Activated naive CD4-positive, alpha-beta T cell treated with anti-CD3 and anti-CD28 coated beads for 36 hours (primary cell): ENCODE measurements at regions of chr4 and their contacts with region 1.

Region 1: DNA sequence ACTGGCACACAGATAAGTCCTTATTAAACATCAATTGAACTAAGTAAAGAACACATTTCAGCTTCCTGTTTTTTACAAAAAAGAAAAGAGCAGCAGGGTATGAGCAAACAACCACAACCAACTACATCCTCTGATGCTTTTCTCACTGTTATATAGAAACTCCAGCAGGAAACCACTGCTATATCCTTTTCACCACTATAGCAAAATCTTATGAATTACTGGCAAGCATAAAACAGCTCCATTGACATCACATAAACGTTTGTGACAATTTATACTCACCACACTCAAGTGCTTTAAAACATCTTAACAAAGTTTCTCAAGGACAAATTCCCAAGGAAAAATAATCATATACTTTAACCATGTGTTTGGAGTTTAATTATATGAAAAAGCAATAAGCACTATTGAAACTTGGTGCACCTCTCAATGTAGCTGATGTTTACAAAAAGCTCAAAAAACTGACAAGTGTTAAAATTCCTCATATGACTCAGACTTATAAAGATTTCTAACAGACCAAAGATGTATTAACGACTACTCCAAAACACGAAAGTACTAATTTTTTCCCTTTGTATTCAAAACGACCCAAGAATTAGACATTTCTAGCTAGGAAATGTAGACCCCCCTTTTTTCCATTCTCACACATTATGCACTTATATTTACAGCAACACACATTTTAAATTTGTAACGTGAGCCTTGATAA is 12.9 kb downstream of the GPRIN3 start:
- DNase-seq: no peak
- H3K4me3 Mint-ChIP-seq: peak overlapping the region; percentile 49
- H3K27ac Mint-ChIP-seq: peak overlapping the region; percentile 94
- H3K4me1 Mint-ChIP-seq: peaks cover 79% of the 10 kb centered on the region
- H3K27me3 Mint-ChIP-seq: no peaks in the 10 kb centered on the region

Region 2: GRCh38 chr4:88378691-88379559 is 915.8 kb before region 1 on chr4 and contains the start of gene HERC6:
- CTCF ChIA-PET with region 1: no interaction called
- intact Hi-C with region 1: loop called (anchors 5 kb)
- DNase-seq: peak; percentile 84
- H3K4me3 Mint-ChIP-seq: peak within 1 kb of the TSS; percentile 85
- H3K27ac Mint-ChIP-seq: peak within 1 kb of the TSS; percentile 69
- H3K4me1 Mint-ChIP-seq: peaks cover 40% of the 10 kb centered on the region
- H3K27me3 Mint-ChIP-seq: no peaks in the 10 kb centered on the region
- total RNA-seq, gene HERC6: 9.9 to 10.2 TPM

Region 3: DNA sequence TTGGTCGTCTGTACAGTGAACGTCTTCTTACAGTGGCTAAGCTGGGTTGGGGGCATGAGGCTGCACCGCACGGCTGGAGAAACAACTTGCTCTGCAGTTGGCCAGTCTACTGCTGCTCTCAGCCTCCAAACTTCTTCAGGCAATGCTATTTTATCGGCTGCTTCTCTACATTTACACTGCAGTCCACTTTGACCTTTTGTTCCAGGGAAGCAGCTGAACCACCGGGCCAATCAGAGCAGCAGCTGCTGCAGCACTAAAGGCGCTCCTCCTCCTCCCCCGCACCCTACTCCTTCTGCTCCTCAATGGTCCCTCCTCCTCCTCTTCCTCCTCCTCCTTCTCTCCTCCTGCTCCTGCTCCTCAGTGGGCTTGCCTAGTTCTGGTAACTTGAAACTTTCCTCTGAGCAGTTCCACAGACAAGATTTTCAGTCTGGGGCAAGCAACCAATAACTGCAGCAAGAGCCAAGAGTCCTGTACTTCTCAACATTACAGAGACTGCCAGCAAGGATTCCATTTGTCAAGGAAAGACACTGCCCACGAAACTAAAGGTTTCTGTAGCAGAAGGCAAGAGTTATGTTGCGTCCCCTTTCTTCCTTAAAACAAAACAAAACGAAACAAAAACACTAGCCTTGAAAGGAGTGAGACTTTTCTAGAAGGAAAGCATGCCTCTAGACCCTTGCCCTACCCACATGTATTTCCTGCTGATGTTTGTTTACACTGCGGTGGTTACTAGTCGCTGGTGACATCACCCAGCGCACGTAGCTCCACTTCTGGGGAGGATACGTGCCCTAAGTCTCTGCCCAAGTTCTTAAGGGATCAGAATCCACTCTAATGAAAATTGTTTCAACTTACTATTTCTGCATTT is 471.4 kb before region 1 on chr4:
- CTCF ChIA-PET with region 1: no interaction called
- intact Hi-C with region 1: loop called (anchors 5 kb)
- DNase-seq: peak; percentile 78
- H3K4me3 Mint-ChIP-seq: peak overlapping the region; percentile 93
- H3K27ac Mint-ChIP-seq: peak overlapping the region; percentile 90
- H3K4me1 Mint-ChIP-seq: peaks cover 25% of the 10 kb centered on the region
- H3K27me3 Mint-ChIP-seq: no peaks in the 10 kb centered on the region

Region 4: GRCh38 chr4:89226665-89227574 is 67.8 kb before region 1 on chr4:
- CTCF ChIA-PET with region 1: interaction called, 13 read pairs
- intact Hi-C with region 1: loop called (anchors 2 kb)
- DNase-seq: peak; percentile 90
- H3K4me3 Mint-ChIP-seq: peak overlapping the region; percentile 58
- H3K27ac Mint-ChIP-seq: no peak overlapping the region
- H3K4me1 Mint-ChIP-seq: peaks cover 11% of the 10 kb centered on the region
- H3K27me3 Mint-ChIP-seq: no peaks in the 10 kb centered on the region

Region 5: GRCh38 chr4:89283226-89284009 is 11.3 kb before region 1 on chr4:
- CTCF ChIA-PET with region 1: interaction called, 6 read pairs
- intact Hi-C with region 1: loop called (anchors 1 kb)
- DNase-seq: no peak
- H3K4me3 Mint-ChIP-seq: no peak overlapping the region
- H3K27ac Mint-ChIP-seq: peak overlapping the region; percentile 28
- H3K4me1 Mint-ChIP-seq: peaks cover 66% of the 10 kb centered on the region
- H3K27me3 Mint-ChIP-seq: no peaks in the 10 kb centered on the region

Region 6: DNA sequence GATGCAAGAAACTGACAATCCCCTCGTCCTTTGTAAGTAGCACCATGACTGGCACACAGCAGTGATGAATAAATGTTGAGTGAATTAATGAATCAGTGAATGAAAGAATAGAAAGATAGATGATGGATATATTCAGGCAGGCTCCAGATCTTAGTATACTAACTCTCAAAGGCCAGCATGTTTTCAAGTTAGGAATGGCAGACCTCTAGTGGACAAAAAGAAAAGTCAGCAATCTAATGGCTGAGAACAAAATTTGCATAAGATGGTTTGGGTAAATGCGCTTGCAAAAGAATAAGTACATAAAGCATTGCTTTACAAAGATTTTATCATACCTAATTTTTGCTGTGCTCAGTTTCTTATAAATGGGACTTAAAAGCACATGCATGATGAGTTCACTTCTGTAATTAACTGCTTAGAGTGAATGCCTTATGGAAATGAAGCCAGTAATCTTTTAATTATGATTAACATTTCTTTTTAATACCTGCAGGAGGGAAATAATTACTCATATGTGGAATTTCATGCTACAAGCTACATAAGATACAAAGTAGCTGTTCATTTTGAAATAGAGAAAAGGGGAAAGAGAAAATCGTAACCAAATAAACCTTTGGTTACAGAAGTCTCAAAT is 139.8 kb after region 1 on chr4:
- CTCF ChIA-PET with region 1: interaction called, 3 read pairs
- intact Hi-C with region 1: loop called (anchors 5 kb)
- DNase-seq: no peak
- H3K4me3 Mint-ChIP-seq: no peak overlapping the region
- H3K27ac Mint-ChIP-seq: no peak overlapping the region
- H3K4me1 Mint-ChIP-seq: peaks cover 14% of the 10 kb centered on the region
- H3K27me3 Mint-ChIP-seq: no peaks in the 10 kb centered on the region